ENCODE measurements at regions of chr2 and their contacts with region 1.

Region 1: GRCh38 chr2:101151141-101151858 is at the start of gene TBC1D8:
- DNase-seq: peak; percentile 89
- ATAC-seq: peak; percentile 63
- H3K4me3 Mint-ChIP-seq: peak within 1 kb of the TSS; percentile 77
- H3K27ac Mint-ChIP-seq: peak within 1 kb of the TSS; percentile 51; the same call in 1 of the 2 replicates
- H3K4me1 Mint-ChIP-seq: peaks cover 62% of the 10 kb centered on the region
- H3K27me3 Mint-ChIP-seq: peaks cover 9% of the 10 kb centered on the region
- CTCF ChIP-seq: no peak
- total RNA-seq, gene TBC1D8: 30.3 to 51.7 TPM (median 32.0 TPM) in 3 replicates

Region 2: GRCh38 chr2:101012706-101013181 is 138.6 kb before region 1 on chr2:
- CTCF ChIA-PET with region 1: interaction called, 20 read pairs
- POLR2A ChIA-PET with region 1: interaction called, 3 read pairs
- DNase-seq: no peak
- ATAC-seq: no peak
- H3K4me3 Mint-ChIP-seq: no peak overlapping the region
- H3K27ac Mint-ChIP-seq: no peak overlapping the region
- H3K4me1 Mint-ChIP-seq: peaks cover 10% of the 10 kb centered on the region
- H3K27me3 Mint-ChIP-seq: no peaks in the 10 kb centered on the region
- CTCF ChIP-seq: peak; percentile 70; the same call in 1 of the 2 replicates

Region 3: DNA sequence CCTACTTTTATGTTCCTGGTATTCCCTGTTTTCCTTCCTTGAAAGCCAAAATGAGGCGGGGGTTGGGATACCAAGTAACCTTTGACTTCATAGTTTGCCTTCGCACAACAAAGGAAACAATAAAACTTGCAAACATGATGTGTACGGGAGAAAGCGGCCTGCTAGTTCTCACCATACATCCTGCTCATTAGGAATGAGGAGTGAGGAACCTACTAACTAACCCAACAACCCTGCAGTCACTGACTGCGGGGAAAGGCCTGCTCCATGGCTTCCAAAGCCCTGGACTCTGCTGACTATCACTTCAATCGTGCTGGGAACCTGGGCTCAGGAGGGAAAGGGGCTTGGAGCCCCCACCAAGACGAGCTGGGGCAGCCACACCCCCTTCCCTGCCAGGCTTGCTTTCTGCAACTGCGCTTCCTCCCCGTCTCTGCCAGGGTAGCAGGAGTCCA is 125.0 kb before region 1 on chr2:
- CTCF ChIA-PET with region 1: interaction called, 12 read pairs
- POLR2A ChIA-PET with region 1: no interaction called
- DNase-seq: no peak
- ATAC-seq: peak; percentile 68
- H3K4me3 Mint-ChIP-seq: no peak overlapping the region
- H3K27ac Mint-ChIP-seq: peak overlapping the region; percentile 73
- H3K4me1 Mint-ChIP-seq: peaks cover 15% of the 10 kb centered on the region
- H3K27me3 Mint-ChIP-seq: no peaks in the 10 kb centered on the region
- CTCF ChIP-seq: no peak

Region 4: GRCh38 chr2:101047075-101047766 is 104.1 kb before region 1 on chr2:
- CTCF ChIA-PET with region 1: interaction called, 10 read pairs
- POLR2A ChIA-PET with region 1: no interaction called
- DNase-seq: no peak
- ATAC-seq: peak; percentile 23; the same call in 1 of the 2 replicates
- H3K4me3 Mint-ChIP-seq: no peak overlapping the region
- H3K27ac Mint-ChIP-seq: no peak overlapping the region
- H3K4me1 Mint-ChIP-seq: peaks cover 32% of the 10 kb centered on the region
- H3K27me3 Mint-ChIP-seq: no peaks in the 10 kb centered on the region
- CTCF ChIP-seq: no peak

Region 5: GRCh38 chr2:101205521-101205998 is 54.3 kb after region 1 on chr2:
- CTCF ChIA-PET with region 1: interaction called, 14 read pairs
- POLR2A ChIA-PET with region 1: no interaction called
- DNase-seq: peak; percentile 41
- ATAC-seq: peak; percentile 99
- H3K4me3 Mint-ChIP-seq: no peak overlapping the region
- H3K27ac Mint-ChIP-seq: no peak overlapping the region
- H3K4me1 Mint-ChIP-seq: peaks cover 10% of the 10 kb centered on the region
- H3K27me3 Mint-ChIP-seq: 0 out of 2 replicates have a peak, but pooled peaks cover under 1% of the 10 kb centered on the region
- CTCF ChIP-seq: no peak

Region 6: GRCh38 chr2:101223814-101224231 is 72.5 kb after region 1 on chr2:
- CTCF ChIA-PET with region 1: interaction called, 14 read pairs
- POLR2A ChIA-PET with region 1: no interaction called
- DNase-seq: no peak
- ATAC-seq: no peak
- H3K4me3 Mint-ChIP-seq: no peak overlapping the region
- H3K27ac Mint-ChIP-seq: no peak overlapping the region
- H3K4me1 Mint-ChIP-seq: no peaks in the 10 kb centered on the region
- H3K27me3 Mint-ChIP-seq: no peaks in the 10 kb centered on the region; the same call in 1 of the 2 replicates
- CTCF ChIP-seq: no peak

Measured in WTC11 (cell line).